ENCODE measurements at regions of chr17 and their contacts with region 1.

Region 1: GRCh38 chr17:32894245-32894644 is 17.3 kb upstream of the MYO1D start:
- DNase-seq: no peak

Region 2: GRCh38 chr17:32877164-32877764 is 17.0 kb before region 1 on chr17:
- CTCF ChIA-PET with region 1: interaction called, 14 read pairs
- POLR2A ChIA-PET with region 1: interaction called, 3 read pairs
- DNase-seq: peak; percentile 86